K562 (cell line): ENCODE measurements at regions of chr1 and their contacts with region 1.

Region 1: GRCh38 chr1:31626223-31627207 is 9.0 kb downstream of the HCRTR1 start:
- DNase-seq: peak in 3 of 4 experiments; percentile 32 to 46 (median 46)
- ATAC-seq: peak; percentile 37
- H3K4me3 ChIP-seq: no peak overlapping the region
- H3K27ac ChIP-seq: no peak overlapping the region
- H3K4me1 ChIP-seq: peaks cover 0 to 15% of the 10 kb centered on the region in 2 experiments; a peak in 3 of 5 replicates
- H3K27me3 ChIP-seq: no peaks in the 10 kb centered on the region
- CTCF ChIP-seq: no peak
- EP300 ChIP-seq: no peak
- POLR2A ChIP-seq: no peak
- RAD21 ChIP-seq: no peak

Region 2: GRCh38 chr1:31517301-31517700 is 109.2 kb before region 1 on chr1:
- CTCF ChIA-PET with region 1: no interaction called
- POLR2A ChIA-PET with region 1: no interaction called
- in situ Hi-C with region 1: no loop called
- intact Hi-C with region 1: no loop called
- DNase-seq: no peak
- ATAC-seq: peak; percentile 53; the same call in 1 of the 3 replicates
- H3K4me3 ChIP-seq: no peak overlapping the region
- H3K27ac ChIP-seq: no peak overlapping the region
- H3K4me1 ChIP-seq: peaks cover 0 to 3% of the 10 kb centered on the region in 2 experiments; a peak in 1 of 5 replicates
- H3K27me3 ChIP-seq: peaks cover 16 to 31% of the 10 kb centered on the region in 2 experiments
- CTCF ChIP-seq: peak; percentile 36 to 37 (median 37); a peak in 5 of 6 replicates
- EP300 ChIP-seq: no peak
- POLR2A ChIP-seq: no peak
- RAD21 ChIP-seq: no peak

Region 3: DNA sequence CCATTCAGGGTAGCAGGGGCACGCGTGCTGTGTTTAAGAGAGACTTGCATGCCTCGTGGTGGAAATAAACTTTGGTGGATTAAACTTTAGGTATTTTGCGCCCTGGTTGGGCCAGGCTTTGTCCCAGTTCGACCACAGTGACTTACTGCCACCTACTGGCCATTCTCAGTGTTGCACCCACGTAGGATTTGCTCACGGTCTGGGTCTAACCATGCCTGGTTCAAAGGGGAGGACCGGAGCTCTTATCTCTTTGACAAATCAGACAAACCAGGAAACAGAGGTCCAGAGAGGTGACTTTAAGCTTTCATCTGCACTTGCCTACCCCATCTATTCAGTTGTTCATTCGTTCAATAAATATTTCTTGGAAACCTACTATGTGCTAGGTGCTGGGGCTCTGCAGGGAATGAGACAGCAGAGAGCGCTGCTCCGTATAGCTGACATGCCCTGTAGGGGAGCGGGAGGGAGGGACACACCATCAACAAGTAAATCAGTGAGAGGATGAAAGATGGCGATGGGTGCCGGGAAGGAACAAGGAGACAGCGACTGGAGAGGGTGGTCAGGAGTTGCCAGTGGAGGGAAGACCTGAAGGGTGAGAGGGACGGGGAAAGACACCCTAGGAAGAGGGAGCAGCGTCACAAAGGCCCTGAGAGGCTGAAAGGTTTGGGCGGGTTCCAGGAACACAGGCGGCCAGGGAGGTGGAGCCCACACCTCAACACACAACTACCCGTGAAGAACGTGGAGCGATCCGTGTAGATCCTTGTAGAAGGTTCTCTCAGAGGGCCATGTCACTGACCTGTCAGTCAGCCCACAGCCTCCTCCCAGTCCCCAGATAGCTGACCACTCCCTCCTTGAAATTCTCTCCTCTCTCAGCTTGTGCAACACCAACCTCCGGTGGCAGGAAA is 77.4 kb before region 1 on chr1:
- CTCF ChIA-PET with region 1: no interaction called
- POLR2A ChIA-PET with region 1: no interaction called
- in situ Hi-C with region 1: no loop called
- intact Hi-C with region 1: no loop called
- DNase-seq: peak; percentile 88 to 92 (median 90)
- ATAC-seq: peak; percentile 96
- H3K4me3 ChIP-seq: no peak overlapping the region
- H3K27ac ChIP-seq: no peak overlapping the region; the same call in 2 of the 3 replicates
- H3K4me1 ChIP-seq: peaks cover 13 to 15% of the 10 kb centered on the region in 2 experiments; a peak in 4 of 5 replicates
- H3K27me3 ChIP-seq: peaks cover 0 to 5% of the 10 kb centered on the region in 2 experiments; a peak in 1 of 5 replicates
- CTCF ChIP-seq: peak; percentile 89 to 99 (median 98)
- EP300 ChIP-seq: no peak
- POLR2A ChIP-seq: no peak
- RAD21 ChIP-seq: peak; percentile 98 to 99

Region 4: GRCh38 chr1:31639543-31639942 is 13.0 kb after region 1 on chr1:
- CTCF ChIA-PET with region 1: no interaction called
- POLR2A ChIA-PET with region 1: interaction called, 47 read pairs
- in situ Hi-C with region 1: no loop called
- intact Hi-C with region 1: no loop called
- DNase-seq: no peak
- ATAC-seq: no peak
- H3K4me3 ChIP-seq: no peak overlapping the region
- H3K27ac ChIP-seq: no peak overlapping the region
- H3K4me1 ChIP-seq: peaks cover 0 to 16% of the 10 kb centered on the region in 2 experiments; a peak in 2 of 5 replicates
- H3K27me3 ChIP-seq: no peaks in the 10 kb centered on the region
- CTCF ChIP-seq: no peak
- EP300 ChIP-seq: no peak
- POLR2A ChIP-seq: no peak
- RAD21 ChIP-seq: no peak

Region 5: GRCh38 chr1:31644560-31645273 is 18.2 kb after region 1 on chr1 and contains the start of gene PEF1:
- CTCF ChIA-PET with region 1: no interaction called
- POLR2A ChIA-PET with region 1: interaction called, 47 read pairs
- in situ Hi-C with region 1: no loop called
- intact Hi-C with region 1: no loop called
- DNase-seq: peak; percentile 99 to 100 (median 100)
- ATAC-seq: peak; percentile 91
- H3K4me3 ChIP-seq: peak within 1 kb of the TSS; percentile 62
- H3K27ac ChIP-seq: peak within 1 kb of the TSS; percentile 96
- H3K4me1 ChIP-seq: peaks cover 0 to 13% of the 10 kb centered on the region in 2 experiments; a peak in 3 of 5 replicates
- H3K27me3 ChIP-seq: 0 out of 5 replicates have a peak, but pooled peaks cover 0 to under 1% of the 10 kb centered on the region in 2 experiments
- CTCF ChIP-seq: no peak
- EP300 ChIP-seq: 0 out of 2 replicates have a peak, but pooled peaks have one; percentile 6
- POLR2A ChIP-seq: peak; percentile 91
- RAD21 ChIP-seq: no peak
- polyA plus RNA-seq, gene PEF1: 26.3 to 33.0 TPM

Region 6: DNA sequence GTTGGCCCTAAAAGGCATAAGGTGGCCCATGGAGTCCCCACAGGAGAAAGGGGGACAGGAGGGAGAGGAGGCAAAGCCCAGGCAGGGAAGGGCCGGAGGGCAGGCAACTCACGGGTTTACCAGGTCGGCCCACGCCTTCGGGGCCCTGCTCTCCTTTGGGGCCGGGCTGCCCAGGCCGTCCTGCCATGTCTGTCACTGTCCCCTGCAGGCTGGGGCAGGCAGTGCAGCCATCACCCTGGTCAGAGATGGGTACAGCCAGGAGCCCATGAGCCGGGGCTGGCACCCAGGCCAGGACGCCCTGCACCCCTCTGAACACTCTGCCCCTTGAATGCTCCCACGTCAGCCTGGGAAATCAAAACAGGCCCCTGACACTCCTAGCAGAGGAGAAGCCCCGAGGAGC is 57.5 kb after region 1 on chr1:
- CTCF ChIA-PET with region 1: no interaction called
- POLR2A ChIA-PET with region 1: no interaction called
- in situ Hi-C with region 1: no loop called
- intact Hi-C with region 1: no loop called
- DNase-seq: peak; percentile 36 to 67 (median 60)
- ATAC-seq: peak; percentile 90
- H3K4me3 ChIP-seq: no peak overlapping the region
- H3K27ac ChIP-seq: no peak overlapping the region
- H3K4me1 ChIP-seq: peaks cover 0 to 9% of the 10 kb centered on the region in 2 experiments; a peak in 1 of 5 replicates
- H3K27me3 ChIP-seq: peaks cover 67 to 91% of the 10 kb centered on the region in 2 experiments
- CTCF ChIP-seq: peak; percentile 60 to 71 (median 66)
- EP300 ChIP-seq: no peak
- POLR2A ChIP-seq: no peak
- RAD21 ChIP-seq: peak in 1 of 2 experiments; percentile 51; a peak in 2 of 4 replicates

Region 7: DNA sequence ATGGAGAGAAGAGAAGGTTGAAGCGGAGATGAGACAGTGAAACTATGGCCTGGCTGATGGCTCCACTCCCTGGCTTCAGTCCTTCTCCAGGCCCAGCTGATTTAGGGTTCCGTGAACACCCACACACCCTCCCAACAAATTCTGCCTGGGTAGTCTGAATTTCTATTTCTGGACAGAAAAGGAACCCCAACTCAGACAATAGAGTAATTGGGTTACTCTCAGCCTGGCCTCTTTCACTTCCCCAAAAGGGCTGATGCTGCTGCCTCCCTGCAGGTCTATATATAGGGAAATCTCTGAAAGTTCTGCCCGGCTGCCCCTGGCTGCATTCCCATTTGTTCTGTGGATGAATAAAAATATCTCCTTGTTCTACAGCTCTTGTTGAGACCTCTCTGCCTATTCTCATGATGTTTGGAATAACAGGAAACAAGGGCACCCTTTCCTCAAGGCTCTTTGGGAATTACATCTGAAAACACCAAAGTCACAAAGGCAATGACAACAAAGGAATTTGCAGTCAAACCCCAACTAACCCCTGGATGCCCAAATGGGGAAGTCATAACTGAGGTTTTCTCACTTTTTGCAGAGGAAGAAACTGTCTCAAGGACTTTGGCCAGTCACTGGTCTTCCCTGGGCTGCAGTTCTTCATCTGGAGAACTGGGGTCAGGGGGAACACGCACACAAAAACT is 1834.6 kb after region 1 on chr1:
- CTCF ChIA-PET with region 1: no interaction called
- POLR2A ChIA-PET with region 1: no interaction called
- in situ Hi-C with region 1: no loop called
- intact Hi-C with region 1: no loop called
- DNase-seq: no peak
- ATAC-seq: no peak
- H3K4me3 ChIP-seq: no peak overlapping the region
- H3K27ac ChIP-seq: no peak overlapping the region
- H3K4me1 ChIP-seq: peaks cover 0 to 3% of the 10 kb centered on the region in 2 experiments; a peak in 1 of 5 replicates
- H3K27me3 ChIP-seq: peaks cover 10 to 28% of the 10 kb centered on the region in 2 experiments; a peak in 4 of 5 replicates
- CTCF ChIP-seq: no peak
- EP300 ChIP-seq: no peak
- POLR2A ChIP-seq: no peak
- RAD21 ChIP-seq: no peak